ENCODE measurements at regions of chr12 and their contacts with region 1.

Region 1: DNA sequence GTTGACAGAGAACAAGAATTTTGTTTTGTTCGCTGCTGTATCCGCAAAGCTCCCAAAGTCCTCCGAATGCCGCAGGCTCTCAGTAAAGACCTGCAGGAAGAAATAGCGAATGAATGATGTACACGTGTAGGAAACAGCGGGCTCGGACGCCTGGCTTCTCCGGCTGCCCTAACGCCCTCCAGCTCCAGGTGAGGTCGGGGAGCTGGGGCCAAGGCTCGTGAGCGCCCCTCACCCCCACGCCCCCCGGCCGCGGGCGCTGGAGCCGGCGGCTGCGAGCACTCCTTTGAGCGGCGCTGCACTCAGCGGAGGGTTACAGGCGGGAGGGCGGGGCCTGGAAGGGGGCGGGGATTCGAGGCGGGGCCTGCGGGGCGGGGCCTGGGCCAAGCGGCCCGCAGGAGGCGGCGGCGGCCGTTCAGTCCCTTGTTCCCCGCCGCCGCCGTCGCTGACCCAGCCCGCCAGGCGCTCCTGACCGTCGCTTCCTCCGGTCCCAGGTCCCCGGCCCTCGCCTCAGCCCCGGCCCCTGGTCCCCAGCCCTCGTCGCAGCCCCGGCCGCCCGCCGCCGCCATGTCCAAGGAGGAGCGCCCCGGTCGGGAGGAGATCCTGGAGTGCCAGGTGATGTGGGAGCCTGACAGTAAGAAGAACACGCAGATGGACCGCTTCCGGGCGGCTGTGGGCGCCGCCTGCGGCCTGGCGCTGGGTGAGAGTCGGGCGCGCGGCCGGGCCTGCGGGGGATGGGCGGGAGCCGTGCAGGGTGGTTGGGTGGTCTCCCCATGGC is at the start of gene AACS:
- DNase-seq: peak; percentile 63
- H3K4me3 Mint-ChIP-seq: peak within 1 kb of the TSS; percentile 87
- H3K27ac Mint-ChIP-seq: peak within 1 kb of the TSS; percentile 50
- H3K4me1 Mint-ChIP-seq: peaks cover 17% of the 10 kb centered on the region
- H3K27me3 Mint-ChIP-seq: peaks cover 6% of the 10 kb centered on the region
- total RNA-seq, gene AACS: 45.5 and 46.9 TPM in 2 replicates

Region 2: DNA sequence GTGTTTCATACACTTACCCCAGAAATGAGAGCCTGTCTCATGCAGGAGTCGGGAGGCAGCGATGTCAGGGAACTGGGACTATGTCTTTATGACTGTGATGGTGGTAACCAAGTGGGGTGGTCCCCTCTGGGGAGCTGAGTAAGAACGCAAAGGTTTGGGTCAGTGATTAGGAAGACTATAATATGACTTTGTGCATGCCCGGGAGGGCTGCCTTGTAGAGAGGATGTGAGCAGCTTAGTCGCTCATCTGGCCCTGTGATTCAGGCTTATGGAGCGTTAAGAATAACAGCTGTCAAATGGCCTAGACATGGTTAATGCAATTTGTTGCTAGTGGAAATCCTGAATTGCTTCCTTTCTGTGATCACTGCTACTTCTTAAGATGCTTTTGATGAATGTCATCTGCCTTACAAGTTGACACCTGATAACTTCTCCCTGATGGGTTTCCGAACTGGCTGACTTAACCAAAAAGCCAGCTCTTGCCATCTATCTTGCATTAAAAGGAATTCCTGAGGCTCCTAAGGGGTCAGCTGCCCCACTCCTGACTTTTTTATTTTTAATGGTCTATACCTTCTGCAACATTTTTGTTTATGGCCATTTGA is 35.3 kb before region 1 on chr12:
- intact Hi-C with region 1: no loop called
- DNase-seq: no peak
- H3K4me3 Mint-ChIP-seq: no peak overlapping the region
- H3K27ac Mint-ChIP-seq: no peak overlapping the region
- H3K4me1 Mint-ChIP-seq: no peaks in the 10 kb centered on the region
- H3K27me3 Mint-ChIP-seq: no peaks in the 10 kb centered on the region

Region 3: GRCh38 chr12:125049093-125049458 is 16.1 kb before region 1 on chr12:
- intact Hi-C with region 1: loop called (anchors 1 kb)
- DNase-seq: no peak
- H3K4me3 Mint-ChIP-seq: peak overlapping the region; percentile 86
- H3K27ac Mint-ChIP-seq: peak overlapping the region; percentile 53
- H3K4me1 Mint-ChIP-seq: peaks cover 9% of the 10 kb centered on the region
- H3K27me3 Mint-ChIP-seq: no peaks in the 10 kb centered on the region

Region 4: GRCh38 chr12:126191031-126191891 is 1126.1 kb after region 1 on chr12:
- intact Hi-C with region 1: no loop called
- DNase-seq: no peak
- H3K4me3 Mint-ChIP-seq: no peak overlapping the region
- H3K27ac Mint-ChIP-seq: no peak overlapping the region
- H3K4me1 Mint-ChIP-seq: no peaks in the 10 kb centered on the region
- H3K27me3 Mint-ChIP-seq: no peaks in the 10 kb centered on the region

Measured in activated T-helper 2 cell treated with anti-CD3 and anti-CD28 coated beads, Interferon-gamma antibody, Interleukin-2, Interleukin-4, amounts not matched to agents 10 μg/mL and 5 μg/mL and 100 μg/mL, durations not matched to agents 14 hours and 24 hours and 36 hours (primary cell).